ENCODE measurements at regions of chr2 and their contacts with region 1.

Region 1: DNA sequence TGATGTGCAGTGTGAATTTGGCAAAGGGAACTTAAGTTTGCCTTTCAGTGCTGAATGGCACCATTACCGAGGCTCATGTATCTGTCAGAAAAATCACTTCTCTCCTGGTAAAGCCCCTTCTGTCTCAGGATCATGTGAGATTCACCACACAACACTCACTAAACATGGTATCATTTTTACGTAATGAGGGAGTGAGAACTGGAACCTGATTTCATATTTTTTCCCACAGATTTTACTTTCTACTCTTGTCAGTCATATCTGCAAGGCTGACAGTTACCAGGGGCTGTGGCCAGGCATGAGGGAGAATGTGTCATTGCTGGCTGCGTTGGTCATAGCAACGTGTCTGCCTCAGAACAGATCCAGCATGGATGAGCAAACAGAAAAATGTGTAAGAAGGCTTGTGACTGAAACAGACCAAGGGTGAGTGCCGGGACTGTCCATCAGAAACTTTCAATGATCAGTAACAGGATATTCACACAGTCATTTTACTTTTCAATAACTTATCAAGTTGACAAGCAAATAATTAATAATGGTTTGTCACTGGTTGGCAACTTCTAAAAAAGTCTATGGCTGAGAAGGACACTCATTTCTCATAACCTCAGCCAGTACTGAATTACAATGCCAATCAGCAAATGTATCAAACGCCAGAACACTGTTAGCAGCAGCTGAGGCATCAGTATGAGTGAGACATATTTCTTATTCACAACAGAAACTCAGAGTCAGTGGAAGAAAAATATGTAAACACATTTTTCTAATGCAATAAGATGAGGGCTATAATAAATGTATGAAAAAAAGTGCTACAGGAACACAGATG is 100.5 kb downstream of the CDC42EP3 start:
- DNase-seq: no peak
- H3K4me3 ChIP-seq: no peak overlapping the region
- H3K4me3 Mint-ChIP-seq: no peak overlapping the region
- H3K27ac ChIP-seq: no peak overlapping the region
- H3K27ac Mint-ChIP-seq: no peak overlapping the region
- H3K4me1 ChIP-seq: peaks cover 11% of the 10 kb centered on the region
- H3K4me1 Mint-ChIP-seq: peaks cover 14 to 39% (median 20%) of the 10 kb centered on the region in 4 donors
- H3K27me3 ChIP-seq: no peaks in the 10 kb centered on the region
- H3K27me3 Mint-ChIP-seq: no peaks in the 10 kb centered on the region

Region 2: GRCh38 chr2:37558623-37559022 is 12.4 kb before region 1 on chr2:
- CTCF ChIA-PET with region 1: interaction called, 3 read pairs
- POLR2A ChIA-PET with region 1: interaction called, 10 read pairs
- intact Hi-C with region 1: no loop called
- DNase-seq: no peak
- H3K4me3 ChIP-seq: no peak overlapping the region
- H3K4me3 Mint-ChIP-seq: no peak overlapping the region
- H3K27ac ChIP-seq: no peak overlapping the region
- H3K27ac Mint-ChIP-seq: peak overlapping the region in 2 of 7 donors; percentile 16 to 63
- H3K4me1 ChIP-seq: peaks cover 13% of the 10 kb centered on the region
- H3K4me1 Mint-ChIP-seq: peaks cover 2 to 22% (median 8%) of the 10 kb centered on the region in 4 donors
- H3K27me3 ChIP-seq: no peaks in the 10 kb centered on the region
- H3K27me3 Mint-ChIP-seq: no peaks in the 10 kb centered on the region

Measured in CD4-positive, alpha-beta memory T cell (primary cell).